Ascending aorta (tissue), 2 donors: ENCODE measurements at regions of chr4 and their contacts with region 1.

Region 1: GRCh38 chr4:2761035-2761923 is 5.1 kb upstream of the TNIP2 start:
- DNase-seq: no peak
- H3K4me3 ChIP-seq: no peak overlapping the region
- H3K27ac ChIP-seq: peak overlapping the region in 1 of 2 donors; percentile 63
- H3K4me1 ChIP-seq: peaks cover 0 to 3% of the 10 kb centered on the region in 2 donors
- H3K27me3 ChIP-seq: no peaks in the 10 kb centered on the region
- CTCF ChIP-seq: no peak

Region 2: GRCh38 chr4:2330091-2331042 is 430.9 kb before region 1 on chr4:
- intact Hi-C with region 1: no loop called
- DNase-seq: no peak
- H3K4me3 ChIP-seq: no peak overlapping the region
- H3K27ac ChIP-seq: no peak overlapping the region
- H3K4me1 ChIP-seq: no peaks in the 10 kb centered on the region
- H3K27me3 ChIP-seq: no peaks in the 10 kb centered on the region
- CTCF ChIP-seq: no peak

Region 3: DNA sequence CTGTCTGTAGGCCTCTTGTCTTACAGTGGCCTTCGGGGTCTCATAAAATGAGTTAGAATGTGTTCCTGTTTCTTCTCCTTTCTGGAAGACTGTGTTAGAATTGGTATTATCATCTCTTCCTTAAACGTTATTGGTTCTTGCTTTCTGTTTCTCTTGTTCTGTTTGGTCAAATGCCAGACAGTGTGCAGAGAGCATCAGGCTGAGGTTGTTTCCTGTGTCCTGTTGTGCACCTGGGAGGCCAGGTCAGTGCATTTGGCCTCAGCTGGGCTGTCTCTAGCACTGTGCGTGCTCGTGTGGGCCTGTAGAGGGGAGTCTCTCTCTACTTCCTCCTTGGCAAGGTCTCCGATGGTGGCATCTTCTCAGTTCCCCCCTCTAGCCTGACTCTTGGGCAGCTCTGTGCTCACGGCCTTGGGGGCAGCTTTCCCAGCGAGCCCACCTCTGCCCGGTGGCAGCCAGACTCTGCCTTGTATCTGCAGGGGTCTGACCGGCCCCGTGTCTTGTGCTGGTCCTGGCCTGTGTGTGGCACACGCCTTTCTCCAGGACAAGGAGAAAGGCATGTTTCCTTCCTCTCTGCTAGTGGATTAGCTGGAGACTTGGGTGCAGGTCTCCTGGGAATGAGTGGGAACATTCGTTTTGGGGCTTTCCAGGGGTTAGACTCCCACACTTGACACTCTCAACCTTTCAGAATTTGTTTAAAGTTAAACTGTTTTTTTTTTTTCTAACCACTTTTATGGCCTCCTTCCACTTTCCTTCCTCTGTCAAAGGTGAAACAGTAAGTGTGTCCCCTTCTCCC is 162.6 kb before region 1 on chr4:
- intact Hi-C with region 1: no loop called
- DNase-seq: peak in 1 of 2 donors; percentile 60
- H3K4me3 ChIP-seq: no peak overlapping the region
- H3K27ac ChIP-seq: no peak overlapping the region
- H3K4me1 ChIP-seq: peaks cover 0 to 3% of the 10 kb centered on the region in 2 donors
- H3K27me3 ChIP-seq: no peaks in the 10 kb centered on the region
- CTCF ChIP-seq: peak in 1 of 3 experiments; percentile 16

Region 4: GRCh38 chr4:2689825-2690700 is 71.2 kb before region 1 on chr4:
- intact Hi-C with region 1: no loop called
- DNase-seq: peak; percentile 31 to 68
- H3K4me3 ChIP-seq: no peak overlapping the region
- H3K27ac ChIP-seq: no peak overlapping the region
- H3K4me1 ChIP-seq: no peaks in the 10 kb centered on the region
- H3K27me3 ChIP-seq: no peaks in the 10 kb centered on the region
- CTCF ChIP-seq: no peak

Region 5: DNA sequence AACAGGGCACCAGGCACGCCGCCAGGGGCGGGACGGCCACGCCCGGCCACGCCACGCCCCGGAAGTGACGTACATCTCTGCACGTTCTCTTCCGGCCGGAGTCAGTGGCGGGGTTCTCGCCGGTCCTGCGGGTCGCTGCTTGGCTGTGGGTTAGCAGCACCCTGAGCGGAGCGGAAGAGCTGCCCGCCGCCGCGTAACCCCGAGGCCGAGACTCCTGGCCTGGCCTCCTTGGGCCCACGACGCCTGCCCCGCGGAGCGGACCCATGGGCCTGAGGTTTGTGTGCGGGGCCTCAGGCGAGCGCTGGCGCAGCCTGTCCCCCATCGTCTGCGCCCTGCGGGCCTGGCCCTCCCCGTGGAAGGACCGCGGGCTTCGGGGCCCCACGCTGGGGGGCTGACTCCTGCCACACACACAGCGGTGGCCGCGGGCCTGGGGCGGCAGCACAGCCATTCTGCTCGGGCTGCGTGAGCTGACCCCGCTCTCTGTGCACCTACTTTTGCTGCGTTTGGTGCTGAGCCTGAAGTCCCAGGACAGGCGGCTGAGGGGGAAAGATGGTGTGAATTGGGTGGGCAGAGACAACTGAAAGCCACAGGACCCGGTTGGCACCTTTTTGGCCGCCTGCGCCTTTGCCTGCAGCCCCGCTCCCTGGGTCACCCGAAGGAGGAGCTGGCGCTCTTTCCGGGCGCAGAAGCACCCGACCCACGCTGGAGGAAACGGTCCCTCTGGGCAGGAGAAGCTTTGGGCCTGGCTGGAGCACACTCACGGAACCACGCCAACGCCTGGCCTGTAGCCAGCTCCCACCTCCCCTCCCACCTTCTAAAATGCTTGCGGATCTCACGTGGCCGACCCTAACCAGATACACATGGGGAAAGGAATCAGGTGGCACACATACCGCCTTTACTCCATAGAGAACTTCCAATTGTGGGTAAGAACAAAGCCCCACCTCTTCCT is 173.8 kb after region 1 on chr4:
- intact Hi-C with region 1: loop called (anchors 1 kb)
- DNase-seq: peak; percentile 72 to 95
- H3K4me3 ChIP-seq: peak overlapping the region; percentile 59 to 76
- H3K27ac ChIP-seq: peak overlapping the region; percentile 77 to 79
- H3K4me1 ChIP-seq: peaks cover 0 to 21% of the 10 kb centered on the region in 2 donors
- H3K27me3 ChIP-seq: no peaks in the 10 kb centered on the region
- CTCF ChIP-seq: no peak

Region 6: GRCh38 chr4:3037957-3038461 is 276.7 kb after region 1 on chr4:
- intact Hi-C with region 1: loop called (anchors 5 kb)
- DNase-seq: peak in 1 of 2 donors; percentile 69
- H3K4me3 ChIP-seq: peak overlapping the region; percentile 36 to 46
- H3K27ac ChIP-seq: no peak overlapping the region
- H3K4me1 ChIP-seq: peaks cover 3 to 9% of the 10 kb centered on the region in 2 donors
- H3K27me3 ChIP-seq: no peaks in the 10 kb centered on the region
- CTCF ChIP-seq: no peak

Region 7: GRCh38 chr4:4302416-4302815 is 1541.1 kb after region 1 on chr4:
- intact Hi-C with region 1: no loop called
- DNase-seq: no peak
- H3K4me3 ChIP-seq: no peak overlapping the region
- H3K27ac ChIP-seq: no peak overlapping the region
- H3K4me1 ChIP-seq: no peaks in the 10 kb centered on the region
- H3K27me3 ChIP-seq: no peaks in the 10 kb centered on the region
- CTCF ChIP-seq: no peak